Left cardiac atrium (tissue), 4 donors: ENCODE measurements at regions of chr12 and their contacts with region 1.

Region 1: DNA sequence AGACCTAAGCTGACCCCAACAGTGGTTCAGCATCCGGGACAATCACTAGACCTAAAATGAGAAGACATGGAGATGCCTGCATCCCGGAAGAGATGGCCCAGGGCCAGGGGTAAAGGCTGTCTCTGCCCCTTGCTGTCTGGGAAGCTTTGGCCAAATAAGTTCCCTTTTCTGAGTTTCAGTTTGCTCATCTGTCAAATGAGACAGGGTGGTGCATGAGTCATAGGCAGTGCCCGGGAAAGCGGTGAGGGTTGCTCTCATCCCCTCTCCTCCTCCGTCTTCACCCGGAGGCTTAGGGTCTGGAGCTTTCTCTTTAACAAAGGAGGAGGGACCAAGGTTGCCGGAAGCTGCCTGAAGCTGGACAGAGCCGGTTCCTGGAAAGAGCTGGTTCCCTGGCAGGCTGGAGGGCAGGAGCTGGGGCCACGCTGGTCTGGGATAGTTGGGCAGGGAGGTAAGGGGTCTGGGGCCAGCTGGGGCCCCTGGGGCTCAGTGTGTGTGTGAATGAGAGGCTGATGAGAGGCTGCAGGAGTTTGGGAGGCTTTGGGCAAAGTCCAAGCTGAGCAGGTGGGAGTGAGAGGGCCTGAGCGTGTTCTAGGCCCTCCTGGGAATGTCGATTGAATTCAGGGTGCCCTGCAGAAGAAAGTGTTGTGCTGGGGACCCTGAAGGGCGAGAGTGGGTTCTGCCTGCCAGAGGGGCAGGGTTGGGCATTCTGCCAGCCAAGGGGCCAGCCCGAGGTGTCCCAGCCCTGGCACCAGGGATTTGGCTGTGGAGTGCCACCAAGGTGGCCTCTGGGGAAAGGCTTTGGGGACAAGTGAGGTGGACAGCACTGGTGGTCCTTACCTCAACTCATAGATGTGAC is at the start of gene SDSL:
- DNase-seq: peak; percentile 80
- ATAC-seq: peak; percentile 83 to 97
- total RNA-seq, gene SDSL: 4.2 to 7.0 TPM

Region 2: DNA sequence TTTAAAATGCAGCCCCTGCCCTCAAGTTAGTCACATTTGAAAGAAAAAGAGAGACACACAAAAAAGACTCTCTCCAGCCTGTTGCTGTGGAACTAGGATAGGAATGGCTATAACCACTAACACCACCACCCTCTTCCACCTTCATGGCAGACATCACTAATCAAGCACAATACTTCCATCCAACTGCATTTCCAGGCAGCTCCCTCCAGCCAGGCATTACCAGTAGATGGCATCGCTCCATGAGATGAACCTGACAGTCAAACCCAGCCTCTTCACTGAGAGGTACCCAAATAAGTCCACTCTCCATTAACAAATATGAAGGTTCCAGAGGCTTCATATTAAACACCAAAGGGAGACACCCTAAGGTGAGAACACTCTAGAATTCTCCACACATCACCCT is 111.8 kb before region 1 on chr12:
- intact Hi-C with region 1: loop called (anchors 5 to 10 kb)
- DNase-seq: no peak
- ATAC-seq: no peak